ENCODE measurements at regions of chr14 and their contacts with region 1.

Region 1: GRCh38 chr14:39174560-39175444 is at the start of gene PNN:
- DNase-seq: peak; percentile 95
- H3K4me3 Mint-ChIP-seq: peak within 1 kb of the TSS; percentile 95
- H3K27ac Mint-ChIP-seq: peak within 1 kb of the TSS; percentile 98
- H3K4me1 Mint-ChIP-seq: peaks cover 18% of the 10 kb centered on the region
- H3K27me3 Mint-ChIP-seq: no peaks in the 10 kb centered on the region
- CTCF ChIP-seq: no peak
- total RNA-seq, gene PNN: 93.1 and 93.5 TPM in 2 replicates

Region 2: GRCh38 chr14:39025810-39026627 is 148.8 kb before region 1 on chr14:
- CTCF ChIA-PET with region 1: no interaction called
- intact Hi-C with region 1: no loop called
- DNase-seq: no peak
- H3K4me3 Mint-ChIP-seq: no peak overlapping the region
- H3K27ac Mint-ChIP-seq: no peak overlapping the region
- H3K4me1 Mint-ChIP-seq: no peaks in the 10 kb centered on the region
- H3K27me3 Mint-ChIP-seq: no peaks in the 10 kb centered on the region
- CTCF ChIP-seq: no peak

Region 3: DNA sequence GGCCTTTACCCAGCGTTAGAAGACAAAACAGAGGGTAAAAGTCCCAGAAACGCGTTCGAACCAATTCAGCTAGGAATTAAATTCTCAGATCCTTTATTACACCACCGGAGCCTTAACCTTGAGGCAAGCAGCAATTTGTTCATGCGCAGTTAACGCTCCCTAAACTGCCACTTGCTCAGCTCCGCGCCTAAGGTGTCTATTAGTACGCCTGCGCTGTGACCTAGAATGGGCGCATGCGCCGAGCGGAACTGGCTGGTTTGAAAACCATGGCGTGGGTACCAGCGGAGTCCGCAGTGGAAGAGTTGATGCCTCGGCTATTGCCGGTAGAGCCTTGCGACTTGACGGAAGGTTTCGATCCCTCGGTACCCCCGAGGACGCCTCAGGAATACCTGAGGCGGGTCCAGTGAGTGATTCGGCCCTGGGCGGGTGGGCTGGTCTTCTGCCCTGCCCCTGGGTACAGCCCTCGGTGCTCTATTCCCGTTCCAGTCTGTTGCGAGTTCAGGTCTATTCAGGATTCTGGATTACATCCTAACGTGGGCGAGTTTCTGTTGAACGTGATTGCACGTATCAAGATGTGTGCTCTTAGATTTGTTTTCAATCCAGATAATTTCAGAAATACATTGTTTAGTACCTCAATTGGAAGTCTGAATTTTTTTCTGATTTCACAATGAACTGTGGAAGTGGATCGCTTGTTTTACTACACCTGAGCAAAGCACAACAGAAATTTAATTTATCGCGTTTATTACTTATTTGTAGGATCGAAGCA is 60.5 kb before region 1 on chr14 and contains the start of gene GEMIN2:
- CTCF ChIA-PET with region 1: interaction called, 6 read pairs
- intact Hi-C with region 1: loop called (anchors 1 kb)
- DNase-seq: peak; percentile 87
- H3K4me3 Mint-ChIP-seq: peak within 1 kb of the TSS; percentile 94
- H3K27ac Mint-ChIP-seq: peak within 1 kb of the TSS; percentile 17
- H3K4me1 Mint-ChIP-seq: peaks cover 8% of the 10 kb centered on the region
- H3K27me3 Mint-ChIP-seq: no peaks in the 10 kb centered on the region
- CTCF ChIP-seq: no peak
- total RNA-seq, gene GEMIN2: 15.5 and 20.1 TPM in 2 replicates

Region 4: DNA sequence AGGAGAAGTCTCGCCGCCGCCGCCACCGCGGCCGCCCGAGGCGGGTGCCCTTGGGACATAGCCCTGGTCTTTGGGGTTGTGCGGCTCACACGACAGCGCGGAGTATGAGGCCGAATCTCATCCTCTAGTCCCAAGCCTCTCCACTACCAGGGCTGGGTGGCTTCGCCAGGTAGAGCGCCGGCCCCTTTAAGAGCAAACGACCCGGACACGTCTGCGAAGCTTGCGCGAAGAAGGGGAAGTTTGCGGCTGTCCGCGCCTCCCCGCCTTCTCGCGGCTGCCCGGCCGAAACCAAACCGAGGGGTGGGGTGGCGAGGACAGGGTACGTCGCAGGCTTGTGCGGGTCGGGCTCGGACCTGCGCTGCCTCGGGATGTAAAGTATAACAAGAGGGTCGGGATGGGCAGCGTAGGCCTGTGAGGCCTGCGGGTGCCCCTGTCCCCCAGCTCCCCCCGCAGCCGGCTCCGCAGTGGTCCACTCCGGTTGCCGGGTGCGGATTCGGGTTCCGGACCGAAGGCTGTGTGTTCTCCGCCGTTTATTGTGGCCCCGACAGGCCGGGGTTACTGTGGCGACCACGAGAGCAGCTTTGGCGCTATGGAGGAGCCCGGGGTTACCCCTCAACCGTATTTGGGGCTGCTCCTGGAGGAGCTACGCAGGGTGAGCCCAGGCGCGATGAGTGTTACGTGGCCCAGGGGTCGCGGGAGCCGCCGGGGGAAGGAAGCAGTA is 92.2 kb after region 1 on chr14:
- CTCF ChIA-PET with region 1: no interaction called
- intact Hi-C with region 1: loop called (anchors 2 kb)
- DNase-seq: peak; percentile 76
- H3K4me3 Mint-ChIP-seq: peak overlapping the region; percentile 75
- H3K27ac Mint-ChIP-seq: peak overlapping the region; percentile 85
- H3K4me1 Mint-ChIP-seq: peaks cover 31% of the 10 kb centered on the region
- H3K27me3 Mint-ChIP-seq: no peaks in the 10 kb centered on the region
- CTCF ChIP-seq: no peak

Region 5: GRCh38 chr14:39368261-39368959 is 193.6 kb after region 1 on chr14:
- CTCF ChIA-PET with region 1: interaction called, 3 read pairs
- intact Hi-C with region 1: loop called (anchors 5 kb)
- DNase-seq: peak; percentile 62
- H3K4me3 Mint-ChIP-seq: no peak overlapping the region
- H3K27ac Mint-ChIP-seq: no peak overlapping the region
- H3K4me1 Mint-ChIP-seq: peaks cover 9% of the 10 kb centered on the region
- H3K27me3 Mint-ChIP-seq: no peaks in the 10 kb centered on the region
- CTCF ChIP-seq: peak; percentile 58

Region 6: DNA sequence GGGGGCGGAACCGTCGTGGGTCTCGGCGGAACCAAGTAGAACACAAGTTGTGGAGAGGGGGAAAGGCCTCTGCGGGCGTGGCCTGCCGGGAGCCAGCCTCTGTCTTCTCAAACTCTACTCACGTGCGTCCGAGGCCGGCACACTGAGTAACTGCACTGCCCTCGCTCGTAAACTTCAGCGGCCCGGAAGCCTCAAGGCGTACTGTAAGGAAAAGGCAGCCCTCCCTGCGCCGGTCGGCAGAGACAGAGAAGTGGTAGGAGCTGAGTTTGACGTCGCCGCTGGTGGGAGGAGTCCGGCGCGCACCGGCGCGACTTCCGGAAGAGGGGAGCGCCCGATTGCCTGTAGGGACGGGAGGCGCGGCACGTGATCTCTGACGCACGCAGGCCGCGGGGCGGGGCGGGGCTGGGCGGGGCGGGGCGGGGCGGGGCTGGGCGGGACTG is 257.4 kb after region 1 on chr14 and contains the start of gene FBXO33:
- CTCF ChIA-PET with region 1: no interaction called
- intact Hi-C with region 1: loop called (anchors 5 kb)
- DNase-seq: peak; percentile 96
- H3K4me3 Mint-ChIP-seq: peak within 1 kb of the TSS; percentile 94
- H3K27ac Mint-ChIP-seq: peak within 1 kb of the TSS; percentile 100
- H3K4me1 Mint-ChIP-seq: peaks cover 18% of the 10 kb centered on the region
- H3K27me3 Mint-ChIP-seq: no peaks in the 10 kb centered on the region
- CTCF ChIP-seq: no peak
- total RNA-seq, gene FBXO33: 8.6 and 9.1 TPM in 2 replicates

Measured in Calu3 (cell line).